ENCODE measurements at regions of chr6 and their contacts with region 1.

Region 1: DNA sequence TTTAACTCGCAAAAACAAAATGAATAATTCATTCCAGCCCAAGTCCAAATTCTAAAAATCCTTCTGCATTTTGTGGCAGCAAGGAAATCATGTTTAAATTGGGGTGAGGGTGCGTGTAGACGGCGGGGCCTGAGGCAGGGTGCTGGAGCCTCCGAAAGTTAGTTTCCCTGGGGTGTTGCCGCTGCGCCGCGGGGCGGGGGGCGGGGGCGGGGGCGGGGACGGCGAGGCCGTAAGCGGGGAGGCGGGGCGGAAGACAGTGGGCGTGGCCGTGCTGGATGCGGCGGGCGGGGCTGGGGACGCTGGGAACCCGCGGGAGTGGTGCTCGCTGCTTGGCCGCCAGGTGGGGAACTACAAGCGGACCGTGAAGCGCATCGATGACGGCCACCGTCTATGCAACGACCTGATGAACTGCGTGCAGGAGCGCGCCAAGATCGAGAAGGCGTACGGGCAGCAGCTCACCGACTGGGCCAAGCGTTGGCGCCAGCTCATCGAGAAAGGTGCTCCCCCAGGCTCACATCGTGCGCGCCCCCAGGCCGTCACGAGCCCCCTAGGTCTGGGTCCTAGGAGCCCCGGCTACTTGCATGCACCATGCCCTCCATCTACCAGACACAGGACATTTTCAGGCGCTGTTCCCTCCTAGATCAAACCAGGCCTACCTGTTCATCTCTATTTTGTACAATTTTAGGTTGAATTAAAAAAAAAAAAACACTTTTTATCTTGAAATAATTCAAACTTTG is 29.0 kb downstream of the SPDEF start:
- DNase-seq: peak; percentile 92 to 93
- ATAC-seq: peak; percentile 84 to 86
- H3K4me3 ChIP-seq: peak overlapping the region; percentile 34 to 48 (median 43)
- H3K27ac ChIP-seq: peak overlapping the region; percentile 67 to 78 (median 69)
- H3K4me1 ChIP-seq: peaks cover 6 to 10% of the 10 kb centered on the region in 2 donors
- H3K27me3 ChIP-seq: no peaks in the 10 kb centered on the region
- CTCF ChIP-seq: peak; percentile 71 to 89 (median 80)
- POLR2A ChIP-seq: no peak

Region 2: DNA sequence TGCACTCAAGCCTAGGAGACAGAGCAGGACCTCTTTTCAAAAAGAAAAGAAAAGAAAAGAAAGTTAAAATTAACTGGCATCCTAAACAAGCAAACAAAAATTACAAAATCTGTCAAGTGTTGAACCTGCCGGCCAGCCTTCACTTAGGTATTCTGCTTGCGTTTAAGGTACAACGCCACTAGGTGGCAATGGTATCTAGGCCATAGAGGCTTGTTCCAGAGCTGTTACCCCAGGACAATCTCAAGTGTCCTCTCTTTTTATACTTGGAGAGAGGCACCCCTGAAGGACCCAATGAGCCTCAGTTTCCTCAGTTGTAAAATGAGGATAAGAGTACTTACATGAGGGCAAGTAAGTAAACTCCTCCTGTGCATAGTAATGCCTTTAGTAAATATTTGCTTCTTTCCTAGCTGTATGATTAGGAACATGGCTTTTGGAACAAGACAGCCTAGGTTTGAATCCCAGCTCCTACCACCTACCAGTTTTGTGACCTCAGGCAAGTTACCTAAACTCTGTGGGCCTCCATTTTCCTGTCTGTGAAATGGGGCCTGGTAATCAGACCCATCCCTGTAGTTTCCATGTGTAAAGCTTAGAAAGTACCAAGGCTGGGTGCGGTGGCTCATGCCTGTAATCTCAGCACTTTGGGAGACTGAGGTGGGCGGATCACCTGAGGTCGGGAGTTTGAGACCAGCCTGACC is 67.1 kb before region 1 on chr6:
- in situ Hi-C with region 1: no loop called
- intact Hi-C with region 1: loop called (anchors 5 kb)
- DNase-seq: peak; percentile 24 to 49
- ATAC-seq: peak; percentile 92 to 95
- H3K4me3 ChIP-seq: no peak overlapping the region
- H3K27ac ChIP-seq: no peak overlapping the region
- H3K4me1 ChIP-seq: no peaks in the 10 kb centered on the region
- H3K27me3 ChIP-seq: peaks cover 0 to 5% (median 2%) of the 10 kb centered on the region in 3 donors
- CTCF ChIP-seq: peak; percentile 56 to 78 (median 64)
- POLR2A ChIP-seq: no peak

Region 3: DNA sequence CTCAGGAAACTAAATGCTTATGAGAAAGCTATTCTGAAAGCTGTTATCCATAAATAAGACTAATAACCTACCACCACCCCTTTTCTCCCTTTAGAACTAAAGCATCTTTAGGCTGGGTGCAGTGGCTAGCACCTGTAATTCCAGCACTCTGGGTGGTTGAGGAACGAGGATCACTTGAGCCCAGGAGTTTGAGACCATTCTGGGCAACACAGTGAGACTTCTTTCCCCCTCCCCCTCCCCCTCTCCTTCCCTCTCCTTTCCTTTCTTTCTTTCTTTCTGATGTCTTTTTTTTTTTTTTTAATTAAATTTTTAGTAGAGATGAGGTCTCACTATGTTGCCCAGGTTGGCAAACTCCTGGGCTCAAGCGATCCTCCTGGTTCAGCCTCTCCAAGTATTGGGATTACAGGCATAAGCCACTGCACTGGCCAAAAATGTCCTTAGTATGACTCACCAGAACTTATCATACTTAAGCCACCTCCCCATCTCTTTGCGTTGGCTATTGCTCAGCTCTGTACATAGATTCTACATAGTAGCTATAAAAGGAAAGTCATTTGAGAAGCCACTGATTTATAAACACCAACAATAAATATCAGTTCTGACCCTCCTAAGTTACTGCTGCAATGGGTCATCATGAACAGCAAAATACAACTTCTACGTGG is 83.8 kb after region 1 on chr6:
- in situ Hi-C with region 1: loop called (anchors 5 to 10 kb)
- intact Hi-C with region 1: loop called (anchors 1 kb)
- DNase-seq: no peak
- ATAC-seq: no peak
- H3K4me3 ChIP-seq: no peak overlapping the region
- H3K27ac ChIP-seq: peak overlapping the region; percentile 60 to 74 (median 68)
- H3K4me1 ChIP-seq: peaks cover 34 to 41% of the 10 kb centered on the region in 2 donors
- H3K27me3 ChIP-seq: no peaks in the 10 kb centered on the region
- CTCF ChIP-seq: no peak
- POLR2A ChIP-seq: no peak

Region 4: DNA sequence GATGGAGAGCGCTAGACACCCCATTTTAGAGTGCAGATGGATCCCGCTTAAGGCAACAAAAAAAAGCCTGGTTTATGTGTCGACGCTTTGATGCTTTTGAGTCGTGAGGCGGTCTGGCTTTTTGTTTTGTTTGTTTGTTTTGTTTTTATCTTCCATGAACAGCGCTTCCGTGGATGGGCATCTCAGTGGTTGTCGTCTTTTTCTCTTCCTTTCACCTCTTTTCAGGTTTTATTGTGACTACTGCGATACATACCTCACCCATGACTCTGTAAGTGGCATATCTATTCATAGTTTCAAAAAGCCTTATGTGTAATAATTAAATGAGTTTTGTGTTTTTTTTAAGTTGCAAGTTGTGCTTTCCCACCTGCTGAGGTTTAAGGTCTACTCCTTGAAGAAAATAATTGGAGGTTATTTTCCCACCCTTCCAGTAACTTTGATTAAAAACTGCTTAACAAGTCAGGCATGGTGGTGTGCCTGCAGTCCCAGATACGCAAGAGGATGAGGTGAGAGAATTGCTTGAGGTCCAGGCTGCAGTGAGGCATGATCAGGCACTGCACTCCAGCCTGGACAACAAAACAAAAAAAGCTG is 230.6 kb after region 1 on chr6:
- in situ Hi-C with region 1: no loop called
- intact Hi-C with region 1: loop called (anchors 2 kb)
- DNase-seq: no peak
- ATAC-seq: no peak
- H3K4me3 ChIP-seq: peak overlapping the region; percentile 62 to 87 (median 76)
- H3K27ac ChIP-seq: peak overlapping the region; percentile 91 to 94 (median 92)
- H3K4me1 ChIP-seq: peaks cover 8% of the 10 kb centered on the region in 2 donors
- H3K27me3 ChIP-seq: no peaks in the 10 kb centered on the region
- CTCF ChIP-seq: no peak
- POLR2A ChIP-seq: no peak

Region 5: GRCh38 chr6:34887753-34888513 is 360.8 kb after region 1 on chr6 and contains the start of gene TAF11:
- in situ Hi-C with region 1: no loop called
- intact Hi-C with region 1: loop called (anchors 5 kb)
- DNase-seq: peak; percentile 90 to 93
- ATAC-seq: peak; percentile 93 to 94
- H3K4me3 ChIP-seq: peak within 1 kb of the TSS; percentile 90 to 96 (median 94)
- H3K27ac ChIP-seq: peak within 1 kb of the TSS; percentile 82 to 89 (median 88)
- H3K4me1 ChIP-seq: peaks cover 20 to 23% of the 10 kb centered on the region in 2 donors
- H3K27me3 ChIP-seq: no peaks in the 10 kb centered on the region
- CTCF ChIP-seq: peak in 1 of 5 experiments; percentile 18
- POLR2A ChIP-seq: peak; percentile 70 to 79
- total RNA-seq, gene TAF11: 23.2 to 32.6 (median 24.0) TPM

Measured in gastrocnemius medialis (tissue), 4 donors.